WTC11 (cell line): ENCODE measurements at regions of chr5 and their contacts with region 1.

Region 1: DNA sequence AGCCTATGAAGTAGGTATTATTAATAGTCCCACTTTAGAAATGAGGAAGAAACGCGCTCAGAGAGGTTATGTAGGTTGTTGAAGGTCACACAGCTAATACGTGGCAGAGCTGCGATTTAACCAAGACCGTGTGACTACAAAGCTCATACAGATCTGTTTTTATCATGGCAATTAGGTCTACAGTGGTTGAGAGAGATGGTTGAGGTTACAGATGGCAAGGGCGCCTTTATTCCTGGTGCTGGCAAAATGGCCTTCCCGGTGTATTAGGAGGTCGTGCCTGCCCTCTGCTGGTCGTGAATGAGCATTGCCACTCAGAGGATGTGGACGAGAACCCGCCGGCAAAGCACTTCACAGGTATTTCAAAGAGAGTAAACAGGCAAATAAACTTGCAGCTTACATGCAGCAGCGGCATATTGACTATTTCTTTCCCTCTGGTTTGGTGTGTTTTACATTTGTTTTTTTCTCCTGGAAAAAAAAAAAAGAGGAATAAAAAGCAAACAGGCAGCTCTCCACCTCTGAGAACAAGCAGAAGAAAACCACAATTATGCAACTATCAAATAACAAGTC is 65.3 kb upstream of the EGFLAM start:
- DNase-seq: peak; percentile 77
- ATAC-seq: peak; percentile 85
- H3K4me3 Mint-ChIP-seq: no peak overlapping the region
- H3K27ac Mint-ChIP-seq: no peak overlapping the region
- H3K4me1 Mint-ChIP-seq: peaks cover 18% of the 10 kb centered on the region
- H3K27me3 Mint-ChIP-seq: peaks cover 6% of the 10 kb centered on the region; the same call in 1 of the 2 replicates
- CTCF ChIP-seq: peak; percentile 90

Region 2: GRCh38 chr5:37722236-37723146 is 470.6 kb before region 1 on chr5:
- CTCF ChIA-PET with region 1: interaction called, 11 read pairs
- POLR2A ChIA-PET with region 1: no interaction called
- DNase-seq: no peak
- ATAC-seq: no peak
- H3K4me3 Mint-ChIP-seq: no peak overlapping the region
- H3K27ac Mint-ChIP-seq: no peak overlapping the region
- H3K4me1 Mint-ChIP-seq: peaks cover 25% of the 10 kb centered on the region
- H3K27me3 Mint-ChIP-seq: no peaks in the 10 kb centered on the region
- CTCF ChIP-seq: no peak

Region 3: GRCh38 chr5:37774912-37775483 is 418.1 kb before region 1 on chr5:
- CTCF ChIA-PET with region 1: interaction called, 26 read pairs
- POLR2A ChIA-PET with region 1: no interaction called
- DNase-seq: peak; percentile 67
- ATAC-seq: no peak
- H3K4me3 Mint-ChIP-seq: no peak overlapping the region
- H3K27ac Mint-ChIP-seq: no peak overlapping the region
- H3K4me1 Mint-ChIP-seq: no peaks in the 10 kb centered on the region
- H3K27me3 Mint-ChIP-seq: no peaks in the 10 kb centered on the region; the same call in 1 of the 2 replicates
- CTCF ChIP-seq: peak; percentile 85

Region 4: GRCh38 chr5:37837414-37838032 is 355.6 kb before region 1 on chr5:
- CTCF ChIA-PET with region 1: interaction called, 25 read pairs
- POLR2A ChIA-PET with region 1: interaction called, 11 read pairs
- DNase-seq: peak; percentile 74
- ATAC-seq: peak; percentile 1; the same call in 1 of the 2 replicates
- H3K4me3 Mint-ChIP-seq: peak overlapping the region; percentile 82
- H3K27ac Mint-ChIP-seq: no peak overlapping the region
- H3K4me1 Mint-ChIP-seq: peaks cover 70% of the 10 kb centered on the region
- H3K27me3 Mint-ChIP-seq: peaks cover 99% of the 10 kb centered on the region
- CTCF ChIP-seq: peak; percentile 64

Region 5: GRCh38 chr5:37906416-37906815 is 286.7 kb before region 1 on chr5:
- CTCF ChIA-PET with region 1: no interaction called
- POLR2A ChIA-PET with region 1: no interaction called
- DNase-seq: no peak
- ATAC-seq: no peak
- H3K4me3 Mint-ChIP-seq: no peak overlapping the region
- H3K27ac Mint-ChIP-seq: no peak overlapping the region
- H3K4me1 Mint-ChIP-seq: no peaks in the 10 kb centered on the region
- H3K27me3 Mint-ChIP-seq: no peaks in the 10 kb centered on the region
- CTCF ChIP-seq: no peak

Region 6: GRCh38 chr5:37952021-37952721 is 240.9 kb before region 1 on chr5:
- CTCF ChIA-PET with region 1: interaction called, 10 read pairs
- POLR2A ChIA-PET with region 1: no interaction called
- DNase-seq: peak; percentile 39
- ATAC-seq: peak; percentile 87
- H3K4me3 Mint-ChIP-seq: no peak overlapping the region
- H3K27ac Mint-ChIP-seq: no peak overlapping the region
- H3K4me1 Mint-ChIP-seq: no peaks in the 10 kb centered on the region
- H3K27me3 Mint-ChIP-seq: no peaks in the 10 kb centered on the region
- CTCF ChIP-seq: no peak

Region 7: DNA sequence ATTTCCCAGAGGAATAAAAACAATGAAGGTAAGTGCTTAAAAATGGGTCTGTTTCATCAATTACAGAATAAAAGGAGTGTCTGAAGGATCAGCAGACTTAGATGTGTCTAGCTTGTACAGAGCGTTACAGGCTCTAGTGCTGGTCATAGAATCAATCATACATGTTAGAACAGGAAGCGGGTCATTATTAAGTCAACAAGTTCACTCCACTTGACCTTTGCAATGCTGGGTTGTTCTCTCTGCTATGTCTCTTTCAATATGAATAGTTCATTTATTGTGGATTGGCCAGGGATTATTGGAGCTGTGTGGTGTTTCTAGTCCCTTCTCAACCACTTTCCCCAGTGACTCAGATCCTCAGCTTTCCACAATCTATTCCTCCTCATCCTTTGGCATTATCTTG is 44.6 kb after region 1 on chr5:
- CTCF ChIA-PET with region 1: no interaction called
- POLR2A ChIA-PET with region 1: no interaction called
- DNase-seq: no peak
- ATAC-seq: no peak
- H3K4me3 Mint-ChIP-seq: no peak overlapping the region
- H3K27ac Mint-ChIP-seq: no peak overlapping the region
- H3K4me1 Mint-ChIP-seq: no peaks in the 10 kb centered on the region
- H3K27me3 Mint-ChIP-seq: no peaks in the 10 kb centered on the region; the same call in 1 of the 2 replicates
- CTCF ChIP-seq: no peak